Transverse colon (tissue), 4 donors: ENCODE measurements at regions of chr5 and their contacts with region 1.

Region 1: GRCh38 chr5:158682631-158683030 is 417.1 kb downstream of the EBF1 start:
- DNase-seq: no peak
- H3K4me3 ChIP-seq: no peak overlapping the region
- H3K27ac ChIP-seq: no peak overlapping the region
- H3K4me1 ChIP-seq: no peaks in the 10 kb centered on the region
- H3K27me3 ChIP-seq: no peaks in the 10 kb centered on the region
- CTCF ChIP-seq: no peak
- EP300 ChIP-seq: no peak
- POLR2A ChIP-seq: no peak

Region 2: DNA sequence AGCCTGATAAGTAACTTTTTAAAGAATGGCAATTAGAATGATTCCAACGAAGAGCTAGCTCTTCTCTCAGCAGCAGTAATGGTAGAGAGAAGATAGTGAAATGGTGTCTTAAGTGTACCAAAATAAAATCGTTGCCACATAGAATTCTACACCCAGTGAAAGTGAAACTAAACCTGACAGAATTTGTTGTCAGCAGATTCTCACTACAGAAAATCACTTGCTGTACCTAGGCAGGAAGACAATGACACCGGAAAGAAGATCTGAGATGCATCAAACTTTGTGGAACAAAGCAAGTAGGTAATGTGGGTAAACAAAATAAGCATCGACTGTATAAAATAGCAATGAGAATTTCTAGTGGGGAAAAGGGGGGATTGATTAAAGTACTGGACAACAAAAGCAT is 437.8 kb after region 1 on chr5:
- in situ Hi-C with region 1: loop called in 1 of 4 experiments (anchors 10 kb)
- intact Hi-C with region 1: no loop called
- DNase-seq: no peak
- H3K4me3 ChIP-seq: no peak overlapping the region
- H3K27ac ChIP-seq: no peak overlapping the region
- H3K4me1 ChIP-seq: no peaks in the 10 kb centered on the region
- H3K27me3 ChIP-seq: peaks cover 3% of the 10 kb centered on the region
- CTCF ChIP-seq: no peak
- EP300 ChIP-seq: no peak
- POLR2A ChIP-seq: no peak